Activated naive CD4-positive, alpha-beta T cell treated with anti-CD3 and anti-CD28 coated beads for 36 hours (primary cell): ENCODE measurements at regions of chr3 and their contacts with region 1.

Region 1: GRCh38 chr3:170689893-170690660 is 104.2 kb upstream of the SLC7A14 start:
- DNase-seq: peak; percentile 59
- H3K4me3 Mint-ChIP-seq: no peak overlapping the region
- H3K27ac Mint-ChIP-seq: no peak overlapping the region
- H3K4me1 Mint-ChIP-seq: peaks cover 3% of the 10 kb centered on the region
- H3K27me3 Mint-ChIP-seq: no peaks in the 10 kb centered on the region

Region 2: GRCh38 chr3:169846458-169847193 is 843.5 kb before region 1 on chr3:
- CTCF ChIA-PET with region 1: no interaction called
- intact Hi-C with region 1: no loop called
- DNase-seq: no peak
- H3K4me3 Mint-ChIP-seq: no peak overlapping the region
- H3K27ac Mint-ChIP-seq: no peak overlapping the region
- H3K4me1 Mint-ChIP-seq: no peaks in the 10 kb centered on the region
- H3K27me3 Mint-ChIP-seq: no peaks in the 10 kb centered on the region

Region 3: GRCh38 chr3:170317954-170318353 is 372.1 kb before region 1 on chr3:
- CTCF ChIA-PET with region 1: no interaction called
- intact Hi-C with region 1: loop called (anchors 10 kb)
- DNase-seq: no peak
- H3K4me3 Mint-ChIP-seq: no peak overlapping the region
- H3K27ac Mint-ChIP-seq: no peak overlapping the region
- H3K4me1 Mint-ChIP-seq: no peaks in the 10 kb centered on the region
- H3K27me3 Mint-ChIP-seq: no peaks in the 10 kb centered on the region

Region 4: GRCh38 chr3:171365489-171365888 is 675.4 kb after region 1 on chr3:
- CTCF ChIA-PET with region 1: no interaction called
- intact Hi-C with region 1: no loop called
- DNase-seq: no peak
- H3K4me3 Mint-ChIP-seq: no peak overlapping the region
- H3K27ac Mint-ChIP-seq: no peak overlapping the region
- H3K4me1 Mint-ChIP-seq: peaks cover 50% of the 10 kb centered on the region
- H3K27me3 Mint-ChIP-seq: no peaks in the 10 kb centered on the region